GM12878 (cell line): ENCODE measurements at regions of chr11 and their contacts with region 1.

Region 1: DNA sequence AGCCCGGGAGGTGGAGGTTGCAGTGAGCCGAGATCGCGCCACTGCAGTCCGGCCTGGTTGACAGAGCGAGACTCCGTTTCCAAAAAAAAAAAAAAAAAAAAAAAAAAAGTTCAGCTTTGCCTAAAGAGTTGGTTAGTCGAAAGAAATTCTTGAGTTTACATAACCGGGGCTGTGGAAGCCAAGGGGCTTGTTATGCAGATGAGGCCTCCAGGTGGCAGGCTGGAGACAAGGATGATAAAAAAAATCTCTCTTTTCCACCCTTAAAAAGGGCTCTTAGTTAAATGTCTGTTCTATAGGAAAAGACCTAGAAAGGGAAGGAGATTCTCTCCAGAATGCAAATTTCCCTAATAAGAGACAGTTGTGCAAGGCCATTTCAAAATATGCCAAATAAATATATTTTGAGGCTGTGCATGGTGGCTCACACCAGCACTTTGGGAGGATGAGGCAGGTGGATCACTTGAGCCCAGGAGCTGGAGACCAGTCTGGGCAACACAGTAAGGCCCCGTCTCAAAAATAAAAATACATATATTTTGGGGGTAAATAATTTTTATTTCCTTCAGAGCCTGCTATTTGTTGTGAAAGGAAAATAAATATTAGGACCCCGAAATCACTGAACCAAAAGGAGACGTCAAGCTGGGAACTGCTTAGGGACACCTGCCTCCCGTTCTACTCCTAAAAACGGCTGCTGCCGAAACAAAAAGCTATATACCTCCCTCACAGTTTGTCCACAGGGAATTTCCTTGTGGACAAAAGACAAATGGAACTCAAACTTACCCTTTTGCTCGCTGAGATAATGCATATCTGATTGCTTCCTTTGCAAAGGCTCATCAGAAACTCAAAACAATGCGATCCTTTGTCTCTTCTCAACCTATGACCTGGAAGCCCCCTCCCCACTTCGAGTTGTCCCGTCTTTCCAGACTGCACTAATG is 2.4 kb upstream of the IFITM2 start:
- DNase-seq: no peak
- ATAC-seq: 0 out of 3 replicates have a peak, but pooled peaks have one; percentile 12
- H3K4me3 ChIP-seq: no peak overlapping the region
- H3K27ac ChIP-seq: no peak overlapping the region
- H3K4me1 ChIP-seq: peaks cover 20% of the 10 kb centered on the region
- H3K27me3 ChIP-seq: no peaks in the 10 kb centered on the region
- CTCF ChIP-seq: peak; percentile 66 to 67 (median 66)
- EP300 ChIP-seq: no peak
- POLR2A ChIP-seq: no peak
- RAD21 ChIP-seq: peak; percentile 69

Region 2: DNA sequence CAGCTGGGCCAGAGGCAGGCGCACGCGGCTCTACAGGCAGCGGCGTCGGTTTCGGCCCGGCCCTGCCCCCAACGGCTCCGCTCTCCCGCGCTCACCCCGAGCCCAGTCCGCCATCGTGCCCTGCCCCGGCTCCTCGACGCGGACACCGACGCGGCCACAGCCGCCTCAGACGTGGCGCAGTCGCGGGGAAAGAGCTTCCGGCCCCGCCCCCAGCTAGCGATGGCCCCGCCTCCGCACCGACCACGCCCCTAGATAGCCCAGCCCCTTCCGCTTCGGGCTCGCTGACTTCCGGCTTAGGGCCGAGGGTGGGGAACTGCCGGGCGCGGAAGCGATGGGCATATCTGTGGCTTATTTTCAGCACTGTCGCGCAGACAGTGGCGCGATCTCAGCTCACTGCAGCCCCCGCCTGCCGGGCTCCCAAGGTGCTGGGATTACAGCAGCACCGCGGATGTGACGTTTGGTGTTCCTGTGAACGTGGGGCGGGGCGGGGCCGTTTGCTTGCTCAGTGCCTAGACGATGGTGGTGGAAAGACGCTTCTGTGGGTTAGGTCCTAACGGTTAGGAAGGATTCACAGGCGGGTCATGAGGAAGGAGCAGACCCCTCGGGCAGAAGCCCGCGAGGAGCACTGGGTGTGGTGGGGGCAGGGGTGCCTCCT is 97.8 kb before region 1 on chr11 and contains the starts of genes BET1L and RIC8A:
- CTCF ChIA-PET with region 1: interaction called, 6 read pairs
- POLR2A ChIA-PET with region 1: no interaction called
- RAD21 ChIA-PET with region 1: interaction called, 6 read pairs
- SMC1A ChIA-PET with region 1: no interaction called
- in situ Hi-C with region 1: no loop called
- intact Hi-C with region 1: loop called (anchors 5 kb)
- DNase-seq: peak; percentile 94
- ATAC-seq: peak; percentile 81
- H3K4me3 ChIP-seq: peak within 1 kb of the TSS; percentile 84
- H3K27ac ChIP-seq: peak within 1 kb of the TSS; percentile 97
- H3K4me1 ChIP-seq: peaks cover 27% of the 10 kb centered on the region
- H3K27me3 ChIP-seq: no peaks in the 10 kb centered on the region
- CTCF ChIP-seq: no peak
- EP300 ChIP-seq: no peak; a peak in 1 of 4 replicates
- POLR2A ChIP-seq: peak; percentile 97
- RAD21 ChIP-seq: no peak
- polyA plus RNA-seq, gene BET1L: 6.7 to 12.4 TPM
- polyA plus RNA-seq, gene RIC8A: 10.4 to 12.4 TPM

Region 3: GRCh38 chr11:334264-334994 is 29.2 kb after region 1 on chr11:
- CTCF ChIA-PET with region 1: interaction called, 19 read pairs
- POLR2A ChIA-PET with region 1: interaction called, 14 read pairs
- RAD21 ChIA-PET with region 1: interaction called, 5 read pairs
- SMC1A ChIA-PET with region 1: interaction called, 11 read pairs
- in situ Hi-C with region 1: no loop called
- intact Hi-C with region 1: no loop called
- DNase-seq: no peak
- ATAC-seq: no peak
- H3K4me3 ChIP-seq: no peak overlapping the region
- H3K27ac ChIP-seq: no peak overlapping the region
- H3K4me1 ChIP-seq: peaks cover 25% of the 10 kb centered on the region
- H3K27me3 ChIP-seq: no peaks in the 10 kb centered on the region
- CTCF ChIP-seq: no peak
- EP300 ChIP-seq: no peak
- POLR2A ChIP-seq: no peak
- RAD21 ChIP-seq: no peak

Region 4: DNA sequence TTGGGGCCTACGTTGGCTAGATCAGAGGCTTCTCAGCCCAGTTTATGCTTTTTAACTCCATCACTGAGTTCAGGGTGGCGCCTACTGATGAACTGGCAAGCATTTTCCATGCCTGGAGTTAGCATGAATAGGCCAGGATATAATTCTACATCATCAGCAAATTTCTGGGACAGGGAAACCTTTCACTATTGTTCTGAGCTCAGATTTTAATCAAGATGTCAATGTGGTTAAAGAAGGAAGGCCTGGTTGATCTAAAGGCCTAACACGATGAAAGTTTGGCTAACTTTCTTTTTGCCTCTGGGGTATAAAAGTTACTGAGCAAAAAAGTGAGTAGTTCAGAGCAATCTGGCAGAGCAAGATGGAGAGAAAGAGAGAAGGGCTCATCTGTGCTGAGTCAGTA is 37.1 kb after region 1 on chr11:
- CTCF ChIA-PET with region 1: interaction called, 3 read pairs
- POLR2A ChIA-PET with region 1: interaction called, 4 read pairs
- RAD21 ChIA-PET with region 1: interaction called, 3 read pairs
- SMC1A ChIA-PET with region 1: interaction called, 11 read pairs
- in situ Hi-C with region 1: no loop called
- intact Hi-C with region 1: no loop called
- DNase-seq: no peak
- ATAC-seq: no peak
- H3K4me3 ChIP-seq: no peak overlapping the region
- H3K27ac ChIP-seq: no peak overlapping the region
- H3K4me1 ChIP-seq: peaks cover 2% of the 10 kb centered on the region
- H3K27me3 ChIP-seq: no peaks in the 10 kb centered on the region
- CTCF ChIP-seq: no peak
- EP300 ChIP-seq: no peak
- POLR2A ChIP-seq: no peak
- RAD21 ChIP-seq: no peak

Region 5: GRCh38 chr11:363948-364761 is 59.0 kb after region 1 on chr11:
- CTCF ChIA-PET with region 1: interaction called, 33 read pairs
- POLR2A ChIA-PET with region 1: no interaction called
- RAD21 ChIA-PET with region 1: interaction called, 6 read pairs
- SMC1A ChIA-PET with region 1: interaction called, 4 read pairs
- in situ Hi-C with region 1: no loop called
- intact Hi-C with region 1: no loop called
- DNase-seq: no peak
- ATAC-seq: peak; percentile 98
- H3K4me3 ChIP-seq: no peak overlapping the region
- H3K27ac ChIP-seq: no peak overlapping the region
- H3K4me1 ChIP-seq: no peaks in the 10 kb centered on the region
- H3K27me3 ChIP-seq: peaks cover 4 to 5% of the 10 kb centered on the region in 2 experiments; a peak in 3 of 4 replicates
- CTCF ChIP-seq: peak; percentile 52 to 73 (median 53); a peak in 5 of 6 replicates
- EP300 ChIP-seq: no peak
- POLR2A ChIP-seq: no peak
- RAD21 ChIP-seq: peak; percentile 39

Region 6: GRCh38 chr11:394034-394857 is 89.1 kb after region 1 on chr11 and contains the start of gene PKP3:
- CTCF ChIA-PET with region 1: no interaction called
- POLR2A ChIA-PET with region 1: no interaction called
- RAD21 ChIA-PET with region 1: no interaction called
- SMC1A ChIA-PET with region 1: no interaction called
- in situ Hi-C with region 1: no loop called
- intact Hi-C with region 1: no loop called
- DNase-seq: no peak
- ATAC-seq: no peak
- H3K4me3 ChIP-seq: no peak within 1 kb of the TSS
- H3K27ac ChIP-seq: no peak within 1 kb of the TSS
- H3K4me1 ChIP-seq: no peaks in the 10 kb centered on the region
- H3K27me3 ChIP-seq: no peaks in the 10 kb centered on the region
- CTCF ChIP-seq: no peak
- EP300 ChIP-seq: no peak
- POLR2A ChIP-seq: no peak
- RAD21 ChIP-seq: no peak
- polyA plus RNA-seq, gene PKP3: not detected

Region 7: DNA sequence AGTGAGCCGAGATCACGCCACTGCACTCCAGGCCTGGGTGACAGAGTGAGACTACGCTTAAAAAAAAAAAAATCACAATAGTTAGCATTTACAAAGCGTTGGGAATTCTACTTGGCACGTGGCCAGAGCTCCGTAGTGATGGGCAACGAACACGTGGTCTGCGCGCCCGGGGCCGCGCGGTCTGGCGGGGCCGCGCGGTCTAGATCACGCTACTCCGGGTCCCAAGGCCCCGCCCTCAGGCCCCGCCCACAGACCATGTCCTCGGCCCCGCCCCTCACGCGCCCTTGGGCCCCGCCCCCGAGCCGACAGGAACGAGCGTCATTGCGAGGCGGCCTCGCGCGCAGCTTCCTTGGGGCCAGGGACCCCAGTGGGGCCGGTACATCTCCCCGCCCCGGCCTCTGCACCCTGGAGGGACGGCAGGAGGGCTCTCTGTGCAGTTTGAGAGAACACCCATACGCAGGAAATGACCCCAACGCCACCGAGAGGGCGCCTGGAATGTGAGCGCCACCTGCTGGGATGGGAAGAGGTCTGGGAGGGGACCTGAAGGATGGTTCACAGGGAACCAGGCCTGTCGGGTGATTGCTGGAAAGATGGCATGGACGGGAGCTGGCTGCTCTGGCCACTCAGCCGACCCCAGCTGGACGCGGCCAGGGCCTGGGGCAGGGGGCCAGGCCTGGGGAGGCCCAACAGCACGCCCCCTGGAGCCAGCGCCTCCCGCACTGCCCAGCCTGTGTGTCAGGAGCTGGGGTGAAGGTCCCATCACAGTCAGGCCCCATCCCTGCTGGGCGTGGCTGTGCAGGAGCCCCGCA is 142.9 kb after region 1 on chr11:
- CTCF ChIA-PET with region 1: interaction called, 13 read pairs
- POLR2A ChIA-PET with region 1: interaction called, 4 read pairs
- RAD21 ChIA-PET with region 1: no interaction called
- SMC1A ChIA-PET with region 1: interaction called, 4 read pairs
- in situ Hi-C with region 1: no loop called
- intact Hi-C with region 1: loop called (anchors 10 kb)
- DNase-seq: peak; percentile 54
- ATAC-seq: peak; percentile 79
- H3K4me3 ChIP-seq: peak overlapping the region; percentile 82
- H3K27ac ChIP-seq: peak overlapping the region; percentile 84
- H3K4me1 ChIP-seq: peaks cover 15% of the 10 kb centered on the region
- H3K27me3 ChIP-seq: no peaks in the 10 kb centered on the region
- CTCF ChIP-seq: peak; percentile 83 to 87 (median 87)
- EP300 ChIP-seq: no peak
- POLR2A ChIP-seq: peak; percentile 89
- RAD21 ChIP-seq: peak; percentile 79

Region 8: GRCh38 chr11:518463-519250 is 213.5 kb after region 1 on chr11:
- CTCF ChIA-PET with region 1: no interaction called
- POLR2A ChIA-PET with region 1: no interaction called
- RAD21 ChIA-PET with region 1: no interaction called
- SMC1A ChIA-PET with region 1: no interaction called
- in situ Hi-C with region 1: no loop called
- intact Hi-C with region 1: loop called (anchors 2 kb)
- DNase-seq: no peak
- ATAC-seq: peak; percentile 99
- H3K4me3 ChIP-seq: no peak overlapping the region; the same call in 1 of the 2 replicates
- H3K27ac ChIP-seq: no peak overlapping the region
- H3K4me1 ChIP-seq: peaks cover 3% of the 10 kb centered on the region; the same call in 1 of the 2 replicates
- H3K27me3 ChIP-seq: no peaks in the 10 kb centered on the region
- CTCF ChIP-seq: peak; percentile 84 to 99 (median 97); a peak in 4 of 6 replicates
- EP300 ChIP-seq: no peak
- POLR2A ChIP-seq: peak; percentile 70; the same call in 1 of the 2 replicates
- RAD21 ChIP-seq: peak; percentile 72